Dendritic cell treated with granulocyte-macrophage colony-stimulating factor and Interleukin-4, amounts not matched to agents 40 ng/mL and 50 ng/mL, for 4 days (primary cell): ENCODE measurements at regions of chr6 and their contacts with region 1.

Region 1: GRCh38 chr6:26596579-26597388 is at the start of gene ABT1:
- H3K4me3 Mint-ChIP-seq: no peak within 1 kb of the TSS
- H3K27ac Mint-ChIP-seq: no peak within 1 kb of the TSS
- H3K4me1 Mint-ChIP-seq: peaks cover 30% of the 10 kb centered on the region
- H3K27me3 Mint-ChIP-seq: peaks cover 24% of the 10 kb centered on the region

Region 2: GRCh38 chr6:26501482-26501986 is 95.2 kb before region 1 on chr6:
- intact Hi-C with region 1: no loop called
- H3K4me3 Mint-ChIP-seq: peak overlapping the region; percentile 61
- H3K27ac Mint-ChIP-seq: peak overlapping the region; percentile 7
- H3K4me1 Mint-ChIP-seq: peaks cover 37% of the 10 kb centered on the region
- H3K27me3 Mint-ChIP-seq: peaks cover 34% of the 10 kb centered on the region

Region 3: DNA sequence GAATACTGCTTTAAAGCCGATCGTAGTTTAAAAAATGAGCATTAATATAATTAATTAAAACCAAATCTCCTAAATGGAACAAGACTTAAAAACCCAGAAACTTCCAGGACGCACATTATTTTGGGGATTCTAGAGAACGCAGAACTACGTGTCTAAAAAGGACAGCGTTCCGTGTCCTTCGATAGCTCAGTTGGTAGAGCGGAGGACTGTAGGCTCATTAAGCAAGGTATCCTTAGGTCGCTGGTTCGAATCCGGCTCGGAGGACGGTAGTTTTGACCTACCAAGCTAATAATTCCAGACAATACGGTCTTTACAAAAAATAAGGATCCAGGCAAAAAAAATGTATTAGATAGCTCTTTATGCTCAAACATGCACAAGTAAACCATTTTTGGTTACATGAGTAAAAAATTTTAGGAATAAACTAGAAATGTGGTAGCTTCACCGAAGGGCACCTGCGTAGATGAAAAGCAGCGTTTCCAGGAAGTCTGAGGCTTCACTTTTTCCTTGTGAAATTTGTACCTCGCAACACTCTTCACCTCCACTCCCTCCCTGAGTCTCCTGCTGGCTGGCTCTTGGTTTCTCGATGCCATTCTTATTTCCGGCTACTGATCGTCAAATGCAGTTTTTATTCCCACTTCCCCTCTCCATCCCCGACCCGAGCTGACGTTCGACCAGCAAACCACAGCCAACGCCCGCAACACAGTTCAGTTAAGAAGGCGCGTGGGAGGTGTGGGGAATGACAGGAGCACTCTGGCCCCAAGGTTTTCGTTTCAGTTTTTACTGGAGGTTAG is 19.7 kb before region 1 on chr6:
- intact Hi-C with region 1: loop called (anchors 1 kb)
- H3K4me3 Mint-ChIP-seq: peak overlapping the region; percentile 77
- H3K27ac Mint-ChIP-seq: peak overlapping the region; percentile 96
- H3K4me1 Mint-ChIP-seq: peaks cover 22% of the 10 kb centered on the region
- H3K27me3 Mint-ChIP-seq: peaks cover 4% of the 10 kb centered on the region